ENCODE measurements at regions of chr2 and their contacts with region 1.

Region 1: DNA sequence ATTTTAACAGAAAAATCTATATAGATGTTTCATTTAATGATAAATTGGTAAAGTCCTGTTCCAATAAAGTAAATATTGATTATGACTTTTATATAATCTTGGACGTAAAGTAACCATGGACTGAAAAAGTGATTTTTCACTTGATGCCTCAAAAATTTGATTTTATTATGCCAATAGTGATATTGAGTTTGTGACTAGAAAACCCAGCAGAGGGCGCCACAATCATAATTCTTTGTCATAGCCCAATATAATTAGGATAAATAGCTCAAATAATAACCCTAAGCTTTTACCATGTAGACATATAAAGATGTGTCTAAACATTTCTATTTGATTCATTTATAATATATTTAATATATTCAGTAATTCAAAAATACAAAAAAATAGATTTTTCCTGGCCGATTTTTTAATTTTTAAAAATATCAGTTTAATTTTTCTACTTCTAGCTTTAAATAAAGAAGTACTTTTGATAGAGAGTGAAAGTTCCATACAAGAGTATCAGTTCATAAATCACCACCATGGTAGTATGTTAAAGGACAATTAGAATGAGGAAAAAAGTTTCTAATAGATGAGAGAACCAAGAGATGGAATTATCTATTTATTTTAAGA is 30.7 kb downstream of the CAMKMT start:
- DNase-seq: peak; percentile 41
- H3K4me3 ChIP-seq: peak overlapping the region in 1 of 2 experiments; percentile 24; a peak in 1 of 4 replicates
- H3K27ac ChIP-seq: no peak overlapping the region
- H3K4me1 ChIP-seq: peaks cover 0 to 4% of the 10 kb centered on the region in 2 experiments; a peak in 2 of 4 replicates
- H3K27me3 ChIP-seq: no peaks in the 10 kb centered on the region
- CTCF ChIP-seq: peak; percentile 91
- EP300 ChIP-seq: no peak
- RAD21 ChIP-seq: peak; percentile 86

Region 2: GRCh38 chr2:44016282-44016681 is 376.2 kb before region 1 on chr2:
- CTCF ChIA-PET with region 1: no interaction called
- POLR2A ChIA-PET with region 1: no interaction called
- DNase-seq: no peak
- H3K4me3 ChIP-seq: no peak overlapping the region
- H3K27ac ChIP-seq: no peak overlapping the region
- H3K4me1 ChIP-seq: no peaks in the 10 kb centered on the region
- H3K27me3 ChIP-seq: peaks cover 7% of the 10 kb centered on the region; the same call in 1 of the 2 replicates
- CTCF ChIP-seq: no peak
- EP300 ChIP-seq: no peak
- RAD21 ChIP-seq: no peak

Region 3: DNA sequence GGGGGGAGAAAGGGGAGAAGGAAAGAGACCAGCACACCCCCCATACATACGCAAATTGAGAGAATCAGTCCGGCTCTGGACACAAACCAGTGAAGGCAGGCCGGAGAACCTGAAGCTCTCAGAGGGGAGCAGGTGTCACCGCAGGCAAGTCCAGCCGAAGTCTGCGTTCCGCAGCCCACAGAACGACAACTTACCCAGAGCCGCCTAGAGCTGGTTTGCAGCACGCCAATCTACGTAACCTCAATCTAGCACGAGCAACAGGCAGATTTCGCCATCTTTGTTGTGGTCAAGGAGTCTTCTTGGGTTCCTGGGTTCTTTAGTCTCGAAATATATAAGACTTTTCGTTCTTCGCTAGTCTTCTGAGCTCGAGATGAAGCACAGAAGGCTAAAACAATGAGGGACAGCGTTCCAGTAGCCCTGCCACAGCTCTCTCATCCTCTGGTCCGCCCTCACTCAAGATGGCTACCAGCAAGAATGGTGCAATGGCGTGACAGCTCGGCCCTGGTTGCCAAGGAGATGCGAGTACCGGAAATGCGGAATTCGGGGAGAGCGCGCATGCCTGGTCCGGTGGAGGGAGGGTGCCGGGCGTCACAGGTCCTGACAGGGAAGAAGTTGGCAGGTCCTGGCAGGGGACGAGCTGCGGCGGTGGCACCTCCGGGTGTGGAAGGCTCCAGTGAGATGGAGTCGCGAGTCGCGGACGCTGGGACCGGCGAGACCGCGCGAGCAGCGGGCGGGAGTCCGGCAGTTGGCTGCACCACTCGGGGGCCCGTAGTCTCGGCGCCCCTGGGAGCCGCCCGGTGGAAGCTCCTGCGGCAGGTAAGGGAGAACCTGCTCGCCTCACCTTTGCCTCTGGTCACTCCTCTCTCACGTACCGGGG is 30.9 kb before region 1 on chr2 and contains the starts of genes CAMKMT and PREPL:
- CTCF ChIA-PET with region 1: interaction called, 22 read pairs
- POLR2A ChIA-PET with region 1: interaction called, 3 read pairs
- DNase-seq: peak; percentile 99
- H3K4me3 ChIP-seq: peak within 1 kb of the TSS; percentile 89 to 91
- H3K27ac ChIP-seq: peak within 1 kb of the TSS; percentile 95 to 99
- H3K4me1 ChIP-seq: peaks cover 9 to 10% of the 10 kb centered on the region in 2 experiments; a peak in 2 of 4 replicates
- H3K27me3 ChIP-seq: no peaks in the 10 kb centered on the region
- CTCF ChIP-seq: 0 out of 2 replicates have a peak, but pooled peaks have one; percentile 7
- EP300 ChIP-seq: no peak; a peak in 1 of 4 replicates
- RAD21 ChIP-seq: 0 out of 2 replicates have a peak, but pooled peaks have one; percentile 19
- polyA plus RNA-seq, gene CAMKMT: 5.9 and 6.2 TPM in 2 replicates
- polyA plus RNA-seq, gene PREPL: 22.6 and 32.8 TPM in 2 replicates

Region 4: GRCh38 chr2:44377486-44377885 is 15.0 kb before region 1 on chr2:
- CTCF ChIA-PET with region 1: interaction called, 99 read pairs
- POLR2A ChIA-PET with region 1: no interaction called
- DNase-seq: no peak
- H3K4me3 ChIP-seq: no peak overlapping the region
- H3K27ac ChIP-seq: no peak overlapping the region
- H3K4me1 ChIP-seq: no peaks in the 10 kb centered on the region
- H3K27me3 ChIP-seq: no peaks in the 10 kb centered on the region
- CTCF ChIP-seq: no peak
- EP300 ChIP-seq: no peak
- RAD21 ChIP-seq: no peak

Region 5: GRCh38 chr2:44470151-44470550 is 77.7 kb after region 1 on chr2:
- CTCF ChIA-PET with region 1: interaction called, 18 read pairs
- POLR2A ChIA-PET with region 1: no interaction called
- DNase-seq: no peak
- H3K4me3 ChIP-seq: no peak overlapping the region
- H3K27ac ChIP-seq: no peak overlapping the region
- H3K4me1 ChIP-seq: no peaks in the 10 kb centered on the region
- H3K27me3 ChIP-seq: no peaks in the 10 kb centered on the region
- CTCF ChIP-seq: no peak
- EP300 ChIP-seq: no peak
- RAD21 ChIP-seq: no peak

Region 6: DNA sequence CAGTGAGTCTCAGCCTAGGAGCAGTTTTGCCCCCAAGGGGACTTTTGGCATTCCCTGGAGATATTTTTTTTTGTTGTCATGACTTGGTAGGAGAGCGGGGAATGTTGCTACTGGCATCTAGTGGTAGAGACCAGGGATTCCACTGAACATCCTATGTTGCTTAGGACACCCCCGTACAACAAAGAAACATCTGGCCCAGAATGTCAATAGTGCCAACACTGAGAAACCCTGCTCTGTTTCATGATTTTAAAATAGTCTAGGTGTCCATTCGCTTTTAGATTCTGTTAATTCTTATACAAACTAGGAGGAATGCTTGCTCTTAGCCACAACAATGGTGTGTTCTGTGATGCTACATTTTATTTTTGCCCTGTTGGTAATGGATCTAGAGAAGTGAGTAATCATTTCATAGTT is 323.2 kb after region 1 on chr2:
- CTCF ChIA-PET with region 1: interaction called, 10 read pairs
- POLR2A ChIA-PET with region 1: no interaction called
- DNase-seq: peak; percentile 46
- H3K4me3 ChIP-seq: no peak overlapping the region
- H3K27ac ChIP-seq: peak overlapping the region in 1 of 2 experiments; percentile 31; a peak in 2 of 4 replicates
- H3K4me1 ChIP-seq: peaks cover 0 to 22% of the 10 kb centered on the region in 2 experiments; a peak in 2 of 4 replicates
- H3K27me3 ChIP-seq: no peaks in the 10 kb centered on the region
- CTCF ChIP-seq: peak; percentile 63
- EP300 ChIP-seq: 0 out of 4 replicates have a peak, but pooled peaks of 1 of the 2 experiments have one; percentile 36
- RAD21 ChIP-seq: peak; percentile 95

Region 7: GRCh38 chr2:44941551-44942234 is 549.3 kb after region 1 on chr2 and contains the start of gene SIX3:
- CTCF ChIA-PET with region 1: interaction called, 17 read pairs
- POLR2A ChIA-PET with region 1: no interaction called
- DNase-seq: peak; percentile 89
- H3K4me3 ChIP-seq: peak within 1 kb of the TSS; percentile 56 to 60
- H3K27ac ChIP-seq: peak within 1 kb of the TSS in 1 of 2 experiments; percentile 92; a peak in 2 of 4 replicates
- H3K4me1 ChIP-seq: peaks cover 0 to 42% of the 10 kb centered on the region in 2 experiments; a peak in 2 of 4 replicates
- H3K27me3 ChIP-seq: peaks cover 74% of the 10 kb centered on the region
- CTCF ChIP-seq: no peak
- EP300 ChIP-seq: peak in 1 of 2 experiments; percentile 21; a peak in 1 of 4 replicates
- RAD21 ChIP-seq: no peak
- polyA plus RNA-seq, gene SIX3: 0.58 and 0.67 TPM in 2 replicates

Region 8: DNA sequence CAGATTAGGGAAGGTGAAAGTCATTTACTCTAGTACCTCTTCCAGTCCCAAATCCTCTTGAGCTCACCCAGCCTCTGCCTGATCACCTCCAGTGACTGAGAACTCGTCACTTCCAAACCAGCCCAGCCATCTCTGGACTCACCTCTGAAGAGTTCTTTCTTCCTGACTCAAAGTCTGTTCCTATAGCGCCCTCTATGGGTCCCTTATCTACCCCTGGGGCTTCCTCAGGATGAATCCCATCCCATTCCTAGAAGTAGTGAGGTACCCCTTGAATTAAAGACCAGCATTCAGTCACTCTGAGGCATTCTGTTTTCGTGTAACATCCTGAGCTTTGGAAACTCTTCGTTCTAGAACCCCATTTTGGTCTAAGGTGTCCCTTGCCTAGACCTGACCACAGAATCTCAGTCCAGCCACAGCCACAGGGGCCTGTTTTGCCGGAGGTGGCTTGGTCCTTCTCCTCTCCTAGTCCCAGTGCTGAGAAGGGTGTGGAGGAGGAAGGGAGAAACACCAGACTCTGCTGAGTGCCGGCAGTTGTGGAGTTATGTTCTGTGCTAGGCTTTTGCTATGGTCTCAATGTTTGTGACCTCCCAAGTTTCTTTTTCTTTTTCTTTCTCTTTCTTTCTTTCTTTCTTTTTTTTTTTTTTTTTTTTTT is 581.7 kb after region 1 on chr2:
- CTCF ChIA-PET with region 1: interaction called, 130 read pairs
- POLR2A ChIA-PET with region 1: interaction called, 3 read pairs
- DNase-seq: peak; percentile 83
- H3K4me3 ChIP-seq: no peak overlapping the region
- H3K27ac ChIP-seq: no peak overlapping the region
- H3K4me1 ChIP-seq: peaks cover 0 to 7% of the 10 kb centered on the region in 2 experiments; a peak in 1 of 4 replicates
- H3K27me3 ChIP-seq: no peaks in the 10 kb centered on the region
- CTCF ChIP-seq: peak; percentile 70
- EP300 ChIP-seq: no peak
- RAD21 ChIP-seq: peak; percentile 90